MCF 10A (cell line): ENCODE measurements at regions of chr1 and their contacts with region 1.

Region 1: DNA sequence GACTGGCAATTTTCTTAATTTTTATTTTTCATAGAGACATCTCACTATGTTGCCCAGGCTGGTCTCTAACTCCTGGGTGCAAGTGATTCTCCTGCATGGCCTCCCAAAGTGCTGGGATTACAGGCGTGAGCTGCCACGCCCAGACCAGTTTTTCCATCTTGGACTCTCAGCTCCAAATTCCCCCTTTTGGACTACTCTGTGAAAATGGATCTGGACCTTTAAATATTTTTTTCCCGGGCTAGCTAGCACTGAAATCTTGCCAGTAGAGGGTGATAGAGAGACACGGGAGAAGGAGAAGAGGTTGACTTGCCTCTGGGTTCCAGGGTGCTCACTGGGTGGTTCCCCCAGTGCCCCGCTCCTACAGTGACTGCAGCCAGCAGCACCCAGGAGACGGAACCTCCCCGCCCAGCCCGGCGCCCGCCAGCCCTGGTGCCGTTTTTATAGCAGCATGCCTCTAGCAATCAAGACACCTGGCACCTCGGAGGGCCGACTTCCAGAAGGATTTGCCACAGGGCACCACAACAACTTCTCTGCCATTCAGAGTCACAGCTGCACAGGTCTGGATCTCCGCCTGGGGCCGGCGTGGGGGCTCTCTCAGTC is 34.7 kb upstream of the SCCPDH start:
- DNase-seq: peak; percentile 93
- H3K4me3 Mint-ChIP-seq: peak overlapping the region; percentile 53
- H3K27ac Mint-ChIP-seq: no peak overlapping the region
- H3K4me1 Mint-ChIP-seq: no peaks in the 10 kb centered on the region
- H3K27me3 Mint-ChIP-seq: no peaks in the 10 kb centered on the region
- CTCF ChIP-seq: peak; percentile 97

Region 2: GRCh38 chr1:246629030-246629429 is 60.5 kb before region 1 on chr1:
- CTCF ChIA-PET with region 1: interaction called, 14 read pairs
- POLR2A ChIA-PET with region 1: no interaction called
- intact Hi-C with region 1: no loop called
- DNase-seq: no peak
- H3K4me3 Mint-ChIP-seq: no peak overlapping the region
- H3K27ac Mint-ChIP-seq: no peak overlapping the region
- H3K4me1 Mint-ChIP-seq: peaks cover 8% of the 10 kb centered on the region
- H3K27me3 Mint-ChIP-seq: no peaks in the 10 kb centered on the region
- CTCF ChIP-seq: no peak

Region 3: DNA sequence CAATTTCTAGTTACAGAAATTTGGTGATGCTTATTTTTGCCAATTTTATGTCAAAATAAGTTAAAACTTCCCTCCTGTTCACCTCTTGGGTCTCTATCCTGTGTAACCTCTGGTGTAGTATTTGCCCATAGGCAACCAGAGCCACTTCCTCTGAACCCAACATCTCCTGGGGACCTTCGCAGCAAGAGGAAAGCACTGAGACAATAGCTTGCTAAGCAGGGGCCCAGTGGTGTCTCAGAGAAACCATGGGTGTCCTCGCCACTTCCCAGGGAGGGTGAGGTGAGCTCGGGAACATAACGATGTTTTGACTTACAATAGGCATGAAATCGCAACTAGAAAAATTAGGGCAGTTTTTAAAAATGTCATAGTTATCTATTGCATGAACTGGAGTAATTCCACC is 21.7 kb before region 1 on chr1:
- CTCF ChIA-PET with region 1: interaction called, 29 read pairs
- POLR2A ChIA-PET with region 1: no interaction called
- intact Hi-C with region 1: no loop called
- DNase-seq: no peak
- H3K4me3 Mint-ChIP-seq: no peak overlapping the region
- H3K27ac Mint-ChIP-seq: no peak overlapping the region
- H3K4me1 Mint-ChIP-seq: no peaks in the 10 kb centered on the region
- H3K27me3 Mint-ChIP-seq: no peaks in the 10 kb centered on the region
- CTCF ChIP-seq: no peak

Region 4: GRCh38 chr1:246733704-246734103 is 44.2 kb after region 1 on chr1:
- CTCF ChIA-PET with region 1: interaction called, 25 read pairs
- POLR2A ChIA-PET with region 1: no interaction called
- intact Hi-C with region 1: no loop called
- DNase-seq: no peak
- H3K4me3 Mint-ChIP-seq: no peak overlapping the region
- H3K27ac Mint-ChIP-seq: no peak overlapping the region
- H3K4me1 Mint-ChIP-seq: no peaks in the 10 kb centered on the region
- H3K27me3 Mint-ChIP-seq: no peaks in the 10 kb centered on the region
- CTCF ChIP-seq: no peak

Region 5: DNA sequence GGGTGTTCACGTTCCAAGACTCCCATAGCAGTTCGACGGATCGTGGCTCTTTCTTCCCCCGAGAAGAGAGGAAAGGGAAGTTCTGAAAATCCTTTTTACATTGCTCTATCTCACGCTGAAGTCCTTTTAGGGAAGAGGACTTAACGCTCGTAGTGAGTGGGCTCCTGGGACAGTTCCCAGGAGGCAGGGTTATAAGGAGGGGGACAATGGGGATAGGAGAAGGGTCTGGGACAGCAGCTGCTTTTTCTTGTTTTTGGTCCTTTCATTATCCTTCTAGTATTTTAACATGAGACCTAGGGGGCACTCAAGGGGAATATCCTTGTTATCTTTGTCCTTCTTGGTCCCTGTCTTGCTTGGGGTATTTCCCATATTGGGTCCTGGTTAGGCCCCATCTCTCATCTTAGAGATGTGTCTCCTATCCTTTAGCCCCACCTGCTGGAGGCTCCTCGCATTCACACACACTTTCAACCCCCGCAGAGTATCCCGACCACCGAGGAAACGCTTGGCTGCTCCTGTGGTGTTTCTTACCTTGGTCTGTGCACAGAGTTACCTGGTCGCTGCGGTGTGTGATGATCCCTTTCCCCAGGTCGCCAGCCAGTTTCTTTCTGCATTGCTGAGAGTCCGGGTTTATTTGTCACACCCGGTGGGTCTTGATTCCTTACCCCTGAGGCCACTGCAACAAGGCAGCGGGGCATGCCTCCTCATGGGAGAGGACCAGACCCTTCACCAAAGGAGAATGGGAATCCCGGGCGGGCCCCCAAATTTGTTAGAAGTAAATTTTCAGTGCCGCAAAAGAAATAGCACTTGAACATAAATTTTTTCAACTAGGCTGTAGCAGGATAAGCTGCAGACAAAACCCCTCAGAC is 64.4 kb after region 1 on chr1:
- CTCF ChIA-PET with region 1: interaction called, 464 read pairs
- POLR2A ChIA-PET with region 1: interaction called, 8 read pairs
- intact Hi-C with region 1: loop called (anchors 1 kb)
- DNase-seq: peak; percentile 85
- H3K4me3 Mint-ChIP-seq: no peak overlapping the region
- H3K27ac Mint-ChIP-seq: no peak overlapping the region
- H3K4me1 Mint-ChIP-seq: peaks cover 10% of the 10 kb centered on the region
- H3K27me3 Mint-ChIP-seq: no peaks in the 10 kb centered on the region
- CTCF ChIP-seq: peak; percentile 98

Region 6: DNA sequence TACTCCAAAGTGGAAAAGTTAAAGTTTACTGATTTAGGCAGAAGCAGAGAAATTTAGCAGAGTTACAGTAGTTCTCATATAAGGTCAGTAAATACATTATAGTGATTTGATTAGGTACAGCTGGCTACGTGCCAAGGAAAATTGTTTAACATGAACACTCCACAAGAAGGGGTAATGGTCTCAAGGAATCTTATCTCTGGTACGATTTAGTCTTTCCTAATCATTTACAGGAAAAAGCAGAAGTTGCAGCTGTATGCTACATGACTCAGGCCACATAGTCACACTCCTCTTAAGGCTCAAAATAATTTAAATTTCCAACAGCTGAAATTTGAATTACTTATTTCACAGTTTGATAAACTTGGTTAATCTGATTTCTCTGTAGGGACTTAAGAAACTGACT is 805.3 kb after region 1 on chr1:
- CTCF ChIA-PET with region 1: no interaction called
- POLR2A ChIA-PET with region 1: no interaction called
- intact Hi-C with region 1: no loop called
- DNase-seq: peak; percentile 27
- H3K4me3 Mint-ChIP-seq: no peak overlapping the region
- H3K27ac Mint-ChIP-seq: no peak overlapping the region
- H3K4me1 Mint-ChIP-seq: peaks cover 13% of the 10 kb centered on the region
- H3K27me3 Mint-ChIP-seq: peaks cover 15% of the 10 kb centered on the region
- CTCF ChIP-seq: no peak